ENCODE measurements at regions of chr4 and their contacts with region 1.

Region 1: DNA sequence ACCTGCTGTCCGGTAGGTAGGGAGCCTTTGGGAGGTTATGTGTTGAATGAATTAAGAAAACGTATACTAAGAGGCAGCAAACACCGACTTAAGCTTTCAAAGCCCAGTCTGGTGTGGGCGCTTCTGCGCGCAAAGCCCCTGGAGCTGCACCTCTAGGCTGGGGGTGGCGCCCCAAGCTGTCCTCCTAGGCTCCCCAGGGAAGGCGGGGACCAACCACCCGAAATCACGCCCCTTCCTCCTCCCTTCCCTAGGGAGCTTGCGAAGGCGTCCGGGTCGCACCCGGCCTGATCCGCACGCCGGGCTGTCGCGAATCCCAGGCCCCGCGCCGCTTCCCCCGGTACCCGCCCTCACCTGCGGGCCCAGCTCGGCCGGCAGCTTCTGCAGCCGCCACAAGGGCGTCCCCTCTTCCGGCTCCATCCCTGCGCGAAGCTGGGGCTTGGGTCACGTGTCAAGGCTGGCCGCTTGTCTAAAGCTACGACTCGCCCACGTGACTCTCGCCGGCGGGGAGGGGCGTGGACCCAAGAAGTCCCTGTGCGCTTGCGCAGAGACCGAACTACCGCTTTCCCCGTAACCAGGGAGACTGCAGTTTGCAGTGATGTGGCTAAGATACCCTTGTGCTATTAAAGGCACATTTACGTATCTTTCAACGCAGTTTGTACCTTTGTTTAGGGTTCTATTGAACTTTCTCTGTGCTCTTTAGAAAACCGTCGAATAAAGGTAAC is at the start of gene COMMD8:
- DNase-seq: peak; percentile 94
- ATAC-seq: peak; percentile 96
- H3K4me3 Mint-ChIP-seq: peak within 1 kb of the TSS; percentile 86
- H3K27ac Mint-ChIP-seq: peak within 1 kb of the TSS; percentile 81
- H3K4me1 Mint-ChIP-seq: peaks cover 25% of the 10 kb centered on the region
- H3K27me3 Mint-ChIP-seq: no peaks in the 10 kb centered on the region
- total RNA-seq, gene COMMD8: 23.4 to 24.0 TPM

Region 2: GRCh38 chr4:47485047-47485692 is 21.8 kb after region 1 on chr4 and contains the start of gene ATP10D:
- POLR2A ChIA-PET with region 1: interaction called, 25 read pairs
- DNase-seq: peak; percentile 84
- ATAC-seq: peak; percentile 99
- H3K4me3 Mint-ChIP-seq: peak within 1 kb of the TSS; percentile 99
- H3K27ac Mint-ChIP-seq: peak within 1 kb of the TSS; percentile 95
- H3K4me1 Mint-ChIP-seq: peaks cover 17% of the 10 kb centered on the region
- H3K27me3 Mint-ChIP-seq: no peaks in the 10 kb centered on the region
- total RNA-seq, gene ATP10D: 10.9 to 16.1 TPM

Region 3: DNA sequence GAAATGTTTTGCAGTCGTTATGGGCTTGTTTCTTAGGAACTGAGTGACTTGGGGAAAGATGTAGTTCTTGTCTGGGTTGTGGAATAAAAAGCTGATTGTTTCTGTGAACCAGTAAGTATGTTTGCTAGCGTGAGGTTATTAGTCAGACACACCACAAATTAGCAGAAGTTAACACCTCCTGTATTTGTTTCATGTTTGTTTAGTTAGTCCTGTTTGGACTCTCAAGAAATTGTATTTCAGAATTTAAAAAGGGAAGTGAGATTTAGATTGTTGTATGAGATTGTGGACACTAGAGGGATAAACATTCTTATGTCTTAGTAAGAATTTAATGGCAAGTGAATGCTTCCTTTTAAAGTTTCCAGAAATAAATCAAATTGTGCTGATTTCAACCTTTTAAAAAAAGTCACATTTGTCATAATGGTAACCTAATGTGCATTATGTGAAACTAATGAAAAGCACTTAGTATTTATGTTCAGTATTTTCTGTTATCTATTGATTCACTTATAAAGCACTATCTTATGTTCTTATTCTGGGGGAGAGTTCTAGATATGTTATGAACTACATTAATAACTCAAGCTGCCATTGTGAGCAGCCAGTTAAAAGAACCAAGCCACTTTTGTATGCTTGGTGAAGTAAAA is 47.2 kb after region 1 on chr4:
- POLR2A ChIA-PET with region 1: no interaction called
- DNase-seq: no peak
- ATAC-seq: no peak
- H3K4me3 Mint-ChIP-seq: no peak overlapping the region
- H3K27ac Mint-ChIP-seq: no peak overlapping the region
- H3K4me1 Mint-ChIP-seq: peaks cover 8% of the 10 kb centered on the region
- H3K27me3 Mint-ChIP-seq: no peaks in the 10 kb centered on the region